ENCODE measurements at regions of chr17 and their contacts with region 1.

Region 1: GRCh38 chr17:37283414-37283961 is 92.3 kb upstream of the C17orf78 start:
- DNase-seq: no peak
- ATAC-seq: no peak

Region 2: DNA sequence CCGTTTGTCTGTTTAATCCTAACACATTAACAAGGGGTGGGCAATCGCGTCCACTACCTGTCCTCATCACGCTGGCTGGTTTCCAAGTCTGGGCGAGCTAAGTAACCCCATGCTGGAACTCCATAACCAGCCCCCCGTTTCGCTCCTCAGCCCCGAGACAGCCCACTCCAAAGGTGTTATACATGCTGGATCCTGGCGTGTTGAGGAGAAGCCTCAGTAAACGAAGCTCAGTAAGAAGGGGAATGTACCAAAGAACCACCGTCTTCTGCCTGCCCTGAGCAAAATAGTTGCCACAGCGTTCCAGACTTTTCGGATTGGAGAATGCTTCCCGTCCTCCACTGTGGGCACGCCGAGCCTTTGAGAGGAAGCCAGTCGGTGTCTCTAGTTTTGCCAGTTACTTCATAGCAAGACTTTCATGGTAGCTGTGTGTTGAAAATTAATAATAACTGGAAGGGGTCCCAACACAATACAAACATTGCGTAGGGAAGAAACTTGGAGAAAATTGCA is 76.2 kb after region 1 on chr17:
- intact Hi-C with region 1: loop called (anchors 10 kb)
- DNase-seq: no peak
- ATAC-seq: peak; percentile 0

Region 3: GRCh38 chr17:37643118-37643766 is 359.8 kb after region 1 on chr17 and contains the start of gene DDX52:
- intact Hi-C with region 1: no loop called
- DNase-seq: peak; percentile 96
- ATAC-seq: peak; percentile 100
- total RNA-seq, gene DDX52: 14.6 TPM